Activated CD4-positive, alpha-beta T cell treated with anti-CD3 and anti-CD28 coated beads, Interleukin-2, amount 10 ng/mL, durations not matched to agents 24 days and 14 days (primary cell): ENCODE measurements at regions of chrX and their contacts with region 1.

Region 1: GRCh38 chrX:71283403-71284143 is at the start of gene NONO:
- DNase-seq: peak; percentile 96
- H3K4me3 Mint-ChIP-seq: peak within 1 kb of the TSS; percentile 97
- H3K27ac Mint-ChIP-seq: peak within 1 kb of the TSS; percentile 99
- H3K4me1 Mint-ChIP-seq: peaks cover 13% of the 10 kb centered on the region
- H3K27me3 Mint-ChIP-seq: peaks cover 5% of the 10 kb centered on the region
- total RNA-seq, gene NONO: 580 and 605 TPM in 2 replicates

Region 2: DNA sequence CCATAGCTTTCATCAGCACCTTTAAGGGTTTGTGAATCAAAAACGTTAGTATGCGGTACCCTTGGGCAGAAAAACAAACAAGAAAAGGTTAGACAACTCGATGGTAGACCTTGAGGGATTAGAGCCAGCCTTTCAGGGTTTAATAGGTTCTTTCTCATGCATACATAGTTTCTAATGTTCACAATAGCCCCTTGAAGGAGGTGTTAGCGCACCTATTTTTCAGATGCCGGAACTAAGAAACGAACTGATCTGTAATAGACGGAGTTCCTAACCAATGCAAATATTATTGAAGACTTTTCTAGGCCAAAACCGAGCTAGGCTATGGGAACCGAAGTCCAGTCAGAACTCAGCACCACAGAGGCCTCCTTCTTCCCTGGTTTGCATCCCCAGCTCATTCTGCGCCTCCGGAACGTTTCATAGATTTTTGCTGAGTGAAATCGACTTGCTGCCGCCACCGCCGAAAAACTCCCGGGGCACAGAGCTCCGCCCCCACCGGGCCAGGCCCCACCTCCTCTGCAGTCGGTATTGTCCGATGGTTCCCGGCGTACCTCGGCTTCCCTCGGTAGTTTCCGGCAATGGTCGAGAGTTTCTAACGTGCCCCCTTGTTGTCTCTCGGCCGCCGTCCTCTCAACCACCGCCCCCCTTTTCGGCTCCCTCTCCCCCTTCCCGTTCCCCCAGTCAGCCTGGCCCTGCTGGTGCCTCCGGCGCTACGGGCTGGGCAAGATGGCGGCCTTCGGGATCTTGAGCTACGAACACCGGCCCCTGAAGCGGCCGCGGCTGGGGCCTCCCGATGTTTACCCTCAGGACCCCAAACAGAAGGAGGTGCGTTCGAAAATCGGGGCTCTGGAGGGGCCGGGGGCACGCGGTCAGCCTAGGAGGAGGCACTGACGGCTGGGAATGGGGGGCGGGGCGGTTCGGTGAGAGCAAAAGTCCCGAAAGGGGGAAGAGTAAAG is 165.3 kb before region 1 on chrX and contains the start of gene MED12:
- intact Hi-C with region 1: loop called (anchors 2 kb)
- DNase-seq: peak; percentile 95
- H3K4me3 Mint-ChIP-seq: peak within 1 kb of the TSS; percentile 84
- H3K27ac Mint-ChIP-seq: peak within 1 kb of the TSS; percentile 86
- H3K4me1 Mint-ChIP-seq: peaks cover 16% of the 10 kb centered on the region
- H3K27me3 Mint-ChIP-seq: no peaks in the 10 kb centered on the region
- total RNA-seq, gene MED12: 61.0 and 65.9 TPM in 2 replicates

Region 3: GRCh38 chrX:71198066-71198465 is 85.5 kb before region 1 on chrX:
- intact Hi-C with region 1: loop called (anchors 1 kb)
- DNase-seq: peak; percentile 67
- H3K4me3 Mint-ChIP-seq: peak overlapping the region; percentile 91
- H3K27ac Mint-ChIP-seq: peak overlapping the region; percentile 88
- H3K4me1 Mint-ChIP-seq: peaks cover 18% of the 10 kb centered on the region
- H3K27me3 Mint-ChIP-seq: no peaks in the 10 kb centered on the region

Region 4: DNA sequence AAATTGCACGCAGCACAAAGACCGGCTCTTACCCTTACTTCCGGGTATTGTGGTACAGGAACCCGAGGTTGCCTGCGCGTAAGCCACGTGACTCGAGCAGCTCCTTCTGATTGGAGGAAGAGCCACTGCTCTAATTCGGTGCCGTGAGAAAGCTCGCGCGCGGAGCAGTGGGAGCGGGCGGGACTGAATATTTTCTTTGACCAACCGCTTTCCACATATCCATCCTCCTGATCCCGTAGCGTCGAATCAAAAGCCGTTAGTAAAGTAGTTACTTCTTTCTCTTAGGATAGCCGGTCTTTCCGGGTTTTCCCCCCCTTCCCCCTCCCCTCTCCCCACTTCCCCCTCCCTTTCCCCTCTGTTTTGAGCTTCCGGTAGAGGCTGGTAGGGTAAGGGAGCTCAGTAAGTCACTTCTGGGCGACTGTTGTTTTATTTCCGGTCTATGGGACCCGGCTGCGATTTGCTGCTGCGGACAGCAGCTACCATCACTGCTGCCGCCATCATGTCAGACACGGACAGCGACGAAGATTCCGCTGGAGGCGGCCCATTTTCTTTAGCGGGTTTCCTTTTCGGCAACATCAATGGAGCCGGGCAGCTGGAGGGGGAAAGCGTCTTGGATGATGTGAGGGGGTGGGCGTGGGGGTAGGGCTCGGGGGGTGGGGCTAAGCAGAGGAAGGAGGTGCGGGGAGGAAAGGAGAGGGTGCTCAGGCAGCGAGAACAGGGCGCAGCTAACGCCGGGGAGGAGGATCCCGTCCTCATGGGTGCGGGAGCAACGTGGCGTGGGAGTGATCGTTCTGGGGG is 82.5 kb after region 1 on chrX and contains the start of gene TAF1:
- intact Hi-C with region 1: loop called (anchors 1 kb)
- DNase-seq: peak; percentile 96
- H3K4me3 Mint-ChIP-seq: peak within 1 kb of the TSS; percentile 98
- H3K27ac Mint-ChIP-seq: peak within 1 kb of the TSS; percentile 100
- H3K4me1 Mint-ChIP-seq: peaks cover 21% of the 10 kb centered on the region
- H3K27me3 Mint-ChIP-seq: no peaks in the 10 kb centered on the region
- total RNA-seq, gene TAF1: 46.7 and 47.8 TPM in 2 replicates